Activated CD4-positive, alpha-beta memory T cell treated with anti-CD3 and anti-CD28 coated beads for 36 hours (primary cell): ENCODE measurements at regions of chr17 and their contacts with region 1.

Region 1: DNA sequence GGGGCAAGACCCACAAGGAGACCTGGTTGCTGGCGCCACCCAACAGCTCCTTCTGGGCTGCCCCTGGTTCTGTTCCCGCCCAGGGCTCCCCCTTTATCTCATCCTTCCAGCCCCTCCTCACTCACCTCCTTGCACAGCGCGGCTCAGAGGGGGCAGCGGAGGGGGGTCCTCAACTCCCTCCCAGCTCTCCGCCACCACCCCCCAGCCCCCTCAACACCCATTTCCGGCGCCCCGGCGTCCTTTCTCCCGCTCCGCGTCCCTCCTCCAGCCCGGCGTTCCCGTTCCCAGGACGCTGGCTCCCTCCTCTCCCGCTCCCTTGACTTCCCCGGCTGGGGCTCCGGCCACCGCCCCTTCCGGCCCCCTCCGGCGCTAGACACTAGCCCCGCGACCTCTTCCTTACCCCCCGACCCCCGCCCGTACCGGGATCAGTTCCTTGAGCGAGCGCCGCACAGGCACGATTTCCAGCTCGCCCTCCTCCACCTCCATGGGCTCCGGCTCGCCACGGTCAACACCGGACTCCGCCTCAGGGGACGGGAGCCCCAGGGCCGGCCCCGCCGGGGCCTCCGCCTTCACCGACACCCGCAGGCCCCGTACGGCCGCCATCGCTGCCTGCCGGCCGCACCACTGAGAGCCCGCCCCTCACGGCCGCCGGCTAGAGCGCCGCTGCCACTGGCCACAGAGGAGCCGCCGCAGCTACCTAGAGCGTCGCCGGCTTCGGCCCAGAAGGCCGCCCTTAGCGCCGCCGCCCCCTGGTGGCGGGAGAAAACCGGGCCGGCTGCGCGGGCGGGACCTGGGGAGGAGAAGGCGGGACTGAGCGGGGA is at the start of gene NCBP3:
- DNase-seq: peak; percentile 93
- H3K4me3 Mint-ChIP-seq: peak within 1 kb of the TSS; percentile 94
- H3K27ac Mint-ChIP-seq: peak within 1 kb of the TSS; percentile 86
- H3K4me1 Mint-ChIP-seq: peaks cover 22% of the 10 kb centered on the region
- H3K27me3 Mint-ChIP-seq: no peaks in the 10 kb centered on the region
- total RNA-seq, gene NCBP3: 38.8 to 42.4 TPM

Region 2: DNA sequence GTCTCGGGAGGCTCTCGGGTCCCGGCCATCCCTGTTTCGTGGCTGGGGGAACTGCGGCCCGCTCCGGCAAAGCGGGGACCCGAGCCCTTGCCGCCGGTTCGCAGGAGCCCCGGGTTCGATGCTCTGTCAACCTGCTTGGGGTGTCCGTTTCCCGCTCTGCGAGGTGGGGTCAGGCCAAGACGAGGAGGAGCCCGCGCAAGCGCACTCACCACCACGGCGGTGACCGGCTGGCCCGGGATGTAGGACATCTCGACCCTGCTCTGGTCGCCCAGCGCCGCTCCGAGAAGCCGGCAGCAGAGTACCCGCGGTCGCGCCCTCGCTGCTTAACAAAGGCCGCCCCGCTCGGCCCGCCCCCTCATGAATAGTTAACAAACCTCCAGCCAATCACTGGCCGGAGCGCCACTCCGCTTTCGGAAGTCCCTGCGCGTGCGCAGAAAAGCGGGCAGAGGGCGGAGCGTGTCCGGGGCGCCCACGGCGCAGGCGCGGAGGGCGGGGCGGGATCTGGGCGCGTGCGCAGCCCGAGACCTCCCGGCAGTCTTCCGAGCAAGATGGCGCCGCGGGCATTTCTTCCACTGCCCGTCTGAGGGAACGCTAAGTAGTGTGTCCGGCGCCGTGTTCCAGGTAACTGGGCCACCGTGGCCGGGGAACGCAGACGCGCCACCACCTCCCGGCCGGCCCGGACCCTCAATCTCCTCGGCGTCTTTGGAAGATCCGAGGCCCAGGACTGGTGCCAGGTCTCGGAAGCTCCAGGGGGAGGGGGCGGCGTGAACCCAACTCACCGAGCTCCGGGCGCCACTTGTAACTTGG is 177.3 kb before region 1 on chr17 and contains the starts of genes EMC6 and TAX1BP3:
- CTCF ChIA-PET with region 1: no interaction called
- POLR2A ChIA-PET with region 1: no interaction called
- intact Hi-C with region 1: loop called (anchors 1 kb)
- DNase-seq: peak; percentile 99
- H3K4me3 Mint-ChIP-seq: peak within 1 kb of the TSS; percentile 94
- H3K27ac Mint-ChIP-seq: peak within 1 kb of the TSS; percentile 72
- H3K4me1 Mint-ChIP-seq: peaks cover 17% of the 10 kb centered on the region
- H3K27me3 Mint-ChIP-seq: no peaks in the 10 kb centered on the region
- total RNA-seq, gene EMC6: 49.3 to 55.4 TPM
- total RNA-seq, gene TAX1BP3: 23.7 to 24.5 TPM

Region 3: DNA sequence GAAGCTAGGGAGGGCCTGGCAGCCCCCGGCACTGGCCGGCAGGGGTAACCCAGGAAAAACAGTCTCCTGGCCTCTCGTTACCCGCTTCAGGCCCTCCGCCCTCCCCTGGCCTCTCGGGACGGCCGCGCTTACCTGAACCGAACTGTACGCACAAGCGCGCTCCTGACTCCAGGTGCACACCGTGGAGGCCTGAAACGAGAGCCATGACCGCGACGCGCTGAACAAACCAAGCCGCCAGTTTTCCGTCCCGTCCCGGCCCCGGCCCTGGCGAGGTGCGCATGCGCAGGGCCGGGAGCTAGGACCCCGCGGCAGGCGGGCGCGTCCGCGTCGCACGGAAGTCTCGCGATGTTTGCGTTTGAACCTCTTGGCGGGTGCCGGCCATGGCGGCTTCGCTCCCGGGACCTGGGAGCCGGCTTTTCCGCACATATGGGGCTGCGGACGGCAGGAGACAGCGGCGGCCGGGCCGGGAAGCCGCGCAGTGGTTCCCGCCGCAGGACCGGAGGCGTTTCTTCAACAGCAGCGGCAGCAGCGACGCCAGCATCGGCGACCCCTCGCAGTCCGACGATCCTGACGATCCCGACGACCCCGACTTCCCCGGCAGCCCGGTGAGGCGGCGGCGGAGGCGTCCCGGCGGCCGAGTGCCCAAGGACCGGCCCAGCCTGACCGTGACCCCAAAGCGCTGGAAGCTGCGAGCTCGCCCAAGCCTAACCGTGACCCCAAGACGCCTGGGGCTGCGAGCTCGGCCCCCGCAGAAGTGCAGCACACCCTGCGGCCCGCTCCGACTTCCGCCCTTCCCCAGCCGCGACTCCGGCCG is 122.1 kb before region 1 on chr17 and contains the start of gene HASPIN:
- CTCF ChIA-PET with region 1: interaction called, 11 read pairs
- POLR2A ChIA-PET with region 1: no interaction called
- intact Hi-C with region 1: no loop called
- DNase-seq: peak; percentile 95
- H3K4me3 Mint-ChIP-seq: peak within 1 kb of the TSS; percentile 97
- H3K27ac Mint-ChIP-seq: peak within 1 kb of the TSS; percentile 90
- H3K4me1 Mint-ChIP-seq: peaks cover 54% of the 10 kb centered on the region
- H3K27me3 Mint-ChIP-seq: no peaks in the 10 kb centered on the region
- total RNA-seq, gene HASPIN: 22.0 to 22.7 TPM

Region 4: DNA sequence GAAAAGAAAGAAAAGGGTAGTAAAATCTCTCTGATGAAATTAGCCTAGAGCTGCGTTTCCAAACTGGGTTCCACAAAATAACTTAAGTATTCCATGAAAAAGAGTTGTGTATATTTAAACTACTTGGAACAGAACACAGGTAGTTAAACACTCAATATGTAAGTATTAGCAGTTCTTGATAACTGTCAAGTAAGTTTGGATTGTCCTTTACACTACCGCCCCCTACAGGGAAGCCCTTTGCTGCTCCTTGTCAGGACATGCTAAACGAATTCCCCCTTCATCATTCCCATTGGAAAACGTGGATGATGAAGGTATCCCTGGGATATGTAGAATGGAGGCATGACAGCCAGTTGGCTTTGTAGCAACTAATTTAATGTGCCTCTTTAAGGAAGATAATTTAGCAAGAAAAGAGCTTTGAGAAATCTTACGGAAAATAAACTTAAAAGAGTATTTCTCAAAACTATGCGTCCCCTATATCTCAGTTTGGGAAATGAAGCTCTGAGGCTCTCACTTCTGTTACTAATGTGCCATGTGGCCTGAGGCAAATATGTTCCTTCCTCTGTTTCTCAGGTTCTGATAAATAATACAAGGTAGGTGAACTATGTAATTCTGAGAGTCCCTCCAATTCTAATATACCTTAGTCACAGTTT is 18.6 kb before region 1 on chr17:
- CTCF ChIA-PET with region 1: interaction called, 52 read pairs
- POLR2A ChIA-PET with region 1: no interaction called
- intact Hi-C with region 1: no loop called
- DNase-seq: peak; percentile 72
- H3K4me3 Mint-ChIP-seq: no peak overlapping the region
- H3K27ac Mint-ChIP-seq: no peak overlapping the region
- H3K4me1 Mint-ChIP-seq: no peaks in the 10 kb centered on the region
- H3K27me3 Mint-ChIP-seq: no peaks in the 10 kb centered on the region

Region 5: GRCh38 chr17:3893003-3893719 is 47.3 kb after region 1 on chr17 and contains the start of gene CAMKK1:
- CTCF ChIA-PET with region 1: interaction called, 22 read pairs
- POLR2A ChIA-PET with region 1: no interaction called
- intact Hi-C with region 1: loop called (anchors 1 kb)
- DNase-seq: peak; percentile 92
- H3K4me3 Mint-ChIP-seq: peak within 1 kb of the TSS; percentile 74
- H3K27ac Mint-ChIP-seq: peak within 1 kb of the TSS; percentile 46
- H3K4me1 Mint-ChIP-seq: peaks cover 27% of the 10 kb centered on the region
- H3K27me3 Mint-ChIP-seq: no peaks in the 10 kb centered on the region
- total RNA-seq, gene CAMKK1: 3.3 to 3.9 TPM

Region 6: GRCh38 chr17:3965118-3965803 is 119.4 kb after region 1 on chr17:
- CTCF ChIA-PET with region 1: interaction called, 13 read pairs
- POLR2A ChIA-PET with region 1: interaction called, 5 read pairs
- intact Hi-C with region 1: loop called (anchors 1 kb)
- DNase-seq: peak; percentile 87
- H3K4me3 Mint-ChIP-seq: peak overlapping the region; percentile 85
- H3K27ac Mint-ChIP-seq: peak overlapping the region; percentile 85
- H3K4me1 Mint-ChIP-seq: peaks cover 43% of the 10 kb centered on the region
- H3K27me3 Mint-ChIP-seq: no peaks in the 10 kb centered on the region